Left lung (tissue), 14 donors: ENCODE measurements at regions of chr14 and their contacts with region 1.

Region 1: GRCh38 chr14:101196795-101197591 is 293.5 kb upstream of the RTL1 start:
- DNase-seq: peak in 1 of 4 donors; percentile 21
- ATAC-seq: no peak
- H3K4me3 ChIP-seq: no peak overlapping the region
- H3K27ac ChIP-seq: no peak overlapping the region
- H3K4me1 ChIP-seq: no peaks in the 10 kb centered on the region
- H3K27me3 ChIP-seq: peaks cover 0 to 14% of the 10 kb centered on the region in 2 donors
- CTCF ChIP-seq: no peak

Region 2: GRCh38 chr14:100930260-100930659 is 266.7 kb before region 1 on chr14:
- intact Hi-C with region 1: no loop called
- DNase-seq: no peak
- ATAC-seq: no peak
- H3K4me3 ChIP-seq: no peak overlapping the region
- H3K27ac ChIP-seq: no peak overlapping the region
- H3K4me1 ChIP-seq: no peaks in the 10 kb centered on the region
- H3K27me3 ChIP-seq: no peaks in the 10 kb centered on the region
- CTCF ChIP-seq: no peak

Region 3: DNA sequence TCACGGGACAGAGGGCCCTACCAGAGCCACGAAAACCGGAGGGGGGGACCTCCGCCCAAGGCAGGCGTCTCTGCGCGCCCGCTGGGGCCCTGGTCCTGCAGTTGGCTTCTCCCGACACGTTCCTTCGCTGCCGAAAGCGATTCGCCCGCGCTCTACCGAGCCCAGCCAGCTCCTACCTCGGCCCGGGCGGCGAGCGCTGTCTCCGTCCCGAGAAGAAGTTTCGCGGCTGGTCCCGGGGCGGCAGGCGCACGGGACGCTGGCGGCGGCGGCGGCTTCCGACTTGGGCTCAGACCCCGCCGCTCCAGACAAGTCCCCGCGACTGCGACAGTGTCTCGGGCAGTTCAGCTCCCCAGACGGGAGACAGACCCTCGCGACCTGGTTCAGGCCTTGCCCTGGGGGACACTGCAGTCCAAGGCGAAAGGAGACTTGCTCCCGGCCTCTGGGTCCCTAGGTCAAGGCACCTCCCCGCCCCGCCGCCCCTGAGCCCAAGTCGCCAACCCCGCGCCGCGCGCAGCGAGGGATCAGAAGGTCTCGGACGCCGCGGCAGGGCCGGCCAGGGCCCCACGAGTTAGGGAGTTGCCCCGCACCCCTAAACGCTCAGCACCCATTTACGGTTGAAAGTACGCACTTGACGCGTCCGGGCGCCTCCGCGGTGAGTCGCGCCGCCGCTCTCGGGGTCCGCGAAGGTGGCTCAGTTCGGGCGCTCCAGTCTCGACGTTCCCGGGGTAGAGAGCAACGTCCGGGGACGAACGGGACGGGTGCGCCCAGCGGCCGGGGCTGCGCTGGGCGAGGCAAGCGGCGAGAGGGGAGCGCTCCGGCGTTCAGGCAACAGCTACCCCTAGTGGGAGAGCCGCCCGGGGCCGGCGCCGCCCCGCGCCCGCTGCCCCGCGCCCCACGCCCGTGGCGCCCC is 362.9 kb after region 1 on chr14:
- intact Hi-C with region 1: loop called in 1 of 2 experiments (anchors 10 kb)
- DNase-seq: peak in 3 of 4 donors; percentile 46 to 79 (median 60)
- ATAC-seq: peak; percentile 78
- H3K4me3 ChIP-seq: peak overlapping the region; percentile 25 to 35
- H3K27ac ChIP-seq: peak overlapping the region in 1 of 2 donors; percentile 13
- H3K4me1 ChIP-seq: peaks cover 0 to 4% of the 10 kb centered on the region in 2 donors
- H3K27me3 ChIP-seq: peaks cover 50 to 87% of the 10 kb centered on the region in 2 donors
- CTCF ChIP-seq: peak in 1 of 2 donors; percentile 9